Cardiac septum (tissue), 1 donor: ENCODE measurements at regions of chr4 and their contacts with region 1.

Region 1: DNA sequence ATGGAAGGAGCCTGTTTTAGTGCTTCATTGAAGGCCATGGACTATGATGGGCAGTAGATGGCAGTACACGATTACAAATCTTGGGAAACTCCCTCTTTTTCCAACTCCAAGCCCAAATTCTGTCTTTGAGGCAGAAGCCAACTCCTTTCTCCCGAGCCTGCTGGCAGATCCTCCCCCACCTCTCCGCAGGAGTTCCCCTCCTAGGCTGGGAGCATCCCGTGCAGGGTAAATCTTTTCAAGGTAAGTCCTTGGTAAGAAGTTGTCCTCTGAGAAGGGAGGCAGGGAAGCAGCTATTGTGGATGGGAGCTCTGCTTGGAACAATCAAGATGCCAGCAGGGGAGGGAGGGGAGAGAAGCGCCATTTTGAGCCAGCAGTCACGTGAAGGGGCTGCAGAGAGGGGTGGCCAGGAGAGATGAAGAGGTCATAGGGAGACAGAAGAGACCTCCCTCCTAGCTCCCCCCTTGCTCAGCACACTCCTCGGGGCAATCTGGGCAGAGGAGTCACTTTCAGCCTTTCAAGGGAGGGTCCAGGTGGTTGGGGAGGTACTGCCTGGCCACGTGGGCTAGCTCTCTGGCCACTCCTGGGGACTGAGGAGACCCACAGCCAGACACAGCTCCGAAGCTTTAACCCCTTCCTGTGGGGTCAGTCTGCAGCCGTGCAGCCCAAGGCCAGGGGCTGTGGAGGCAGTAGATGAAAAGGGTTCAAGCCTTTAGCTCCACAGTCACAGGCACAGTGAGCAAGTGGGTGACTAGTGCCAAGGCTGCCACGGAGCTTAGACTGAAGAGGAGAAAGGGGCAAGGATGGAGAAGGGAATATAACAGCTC is 9.6 kb downstream of the CC2D2A start:
- DNase-seq: no peak

Region 2: GRCh38 chr4:15649914-15650545 is 170.7 kb after region 1 on chr4:
- intact Hi-C with region 1: loop called (anchors 5 kb)
- DNase-seq: no peak

Region 3: DNA sequence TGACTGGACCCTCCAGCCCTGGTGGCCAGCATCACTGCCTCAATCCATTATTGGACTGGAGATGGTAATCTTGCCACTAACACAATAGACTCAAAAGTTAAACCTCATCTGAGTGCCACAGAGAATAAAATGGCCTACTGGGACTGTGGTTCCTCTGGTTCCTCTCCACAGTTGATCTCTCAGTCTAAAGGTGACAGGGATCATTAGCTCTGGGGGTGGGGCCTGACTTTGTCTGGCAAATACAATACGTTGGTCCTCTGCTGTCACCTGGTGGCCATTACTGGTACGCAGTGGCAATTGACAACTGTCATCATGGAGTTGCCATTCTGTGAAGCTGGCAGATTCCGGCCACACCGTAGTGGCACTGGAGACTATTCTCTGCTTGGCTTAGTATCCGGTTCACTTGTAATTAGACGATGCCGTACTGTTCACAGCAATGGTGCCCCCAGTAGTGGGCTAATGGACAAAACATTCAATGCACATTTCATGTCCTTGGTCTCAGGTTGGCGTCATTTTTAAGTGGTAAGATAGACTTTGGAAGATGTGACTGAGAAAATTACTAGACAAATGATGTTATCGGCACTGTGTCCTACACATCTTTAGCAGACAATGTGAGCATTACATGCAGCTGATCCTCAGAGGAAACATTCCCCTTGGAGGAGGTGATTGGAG is 477.0 kb after region 1 on chr4:
- intact Hi-C with region 1: loop called (anchors 5 kb)
- DNase-seq: peak; percentile 84

Region 4: DNA sequence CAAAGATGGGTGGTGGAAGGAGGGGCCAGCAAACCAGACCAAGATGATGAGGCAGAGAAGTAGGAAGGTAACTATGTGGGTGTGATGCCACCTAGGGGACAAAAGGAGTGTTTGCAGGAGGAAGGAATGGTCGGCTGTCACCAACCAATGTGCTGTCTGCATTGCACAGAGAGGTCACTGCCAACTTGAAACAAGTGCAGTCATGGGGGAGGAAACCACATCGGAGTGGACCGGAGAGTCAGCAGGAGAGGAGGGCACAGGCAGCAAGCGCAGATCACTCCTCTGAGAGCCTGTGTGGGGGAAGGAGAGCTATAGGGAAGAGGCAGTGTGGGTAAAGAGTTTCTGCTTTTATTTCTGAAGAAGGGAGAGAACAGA is 522.2 kb after region 1 on chr4:
- intact Hi-C with region 1: loop called (anchors 10 kb)
- DNase-seq: no peak